ENCODE measurements at regions of chr1 and their contacts with region 1.

Region 1: DNA sequence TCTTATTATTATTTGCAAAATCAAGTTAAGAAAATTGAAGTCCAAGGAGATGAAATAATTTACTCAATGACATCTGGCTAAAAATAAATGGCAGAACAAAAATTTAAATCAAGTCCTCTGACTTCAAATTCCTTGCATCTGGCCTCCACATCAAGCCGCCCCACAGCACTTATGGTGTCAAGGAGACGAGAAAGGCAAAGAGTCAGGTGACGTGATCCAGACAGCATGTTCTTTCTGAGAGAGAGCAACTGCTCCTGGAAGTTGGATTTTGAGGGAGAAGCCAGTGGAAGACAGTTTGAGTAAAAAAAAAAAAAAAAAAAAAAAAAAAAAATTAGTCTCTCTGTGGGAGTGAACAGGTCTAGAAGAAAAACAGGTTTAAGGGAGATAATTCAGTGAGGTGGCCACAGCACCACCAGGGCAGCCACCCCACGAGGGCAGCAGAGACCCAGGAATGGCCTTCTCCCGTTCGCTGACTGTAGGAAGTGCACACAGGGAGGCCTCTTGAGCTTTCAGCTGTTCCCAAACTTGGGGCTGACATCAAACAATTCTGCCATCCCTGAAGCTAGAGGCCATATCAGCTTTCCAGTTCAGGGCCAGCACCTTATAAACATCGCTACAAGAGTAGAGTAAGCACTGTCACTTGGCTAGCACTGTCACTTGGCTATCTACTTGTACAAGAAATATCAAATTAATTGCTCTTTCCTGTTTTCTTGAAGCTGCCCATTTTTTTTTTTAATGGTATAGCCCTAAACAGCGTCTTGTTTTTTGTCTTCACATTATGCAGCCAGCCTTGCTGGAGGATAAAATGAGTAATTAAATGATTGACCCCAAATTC is 7.8 kb downstream of the C1orf162 start:
- DNase-seq: peak; percentile 76 to 86
- ATAC-seq: peak; percentile 95 to 99 (median 98)
- H3K4me3 ChIP-seq: no peak overlapping the region
- H3K27ac ChIP-seq: peak overlapping the region; percentile 13
- H3K4me1 ChIP-seq: peaks cover 8% of the 10 kb centered on the region
- H3K27me3 ChIP-seq: no peaks in the 10 kb centered on the region
- CTCF ChIP-seq: peak; percentile 71

Region 2: DNA sequence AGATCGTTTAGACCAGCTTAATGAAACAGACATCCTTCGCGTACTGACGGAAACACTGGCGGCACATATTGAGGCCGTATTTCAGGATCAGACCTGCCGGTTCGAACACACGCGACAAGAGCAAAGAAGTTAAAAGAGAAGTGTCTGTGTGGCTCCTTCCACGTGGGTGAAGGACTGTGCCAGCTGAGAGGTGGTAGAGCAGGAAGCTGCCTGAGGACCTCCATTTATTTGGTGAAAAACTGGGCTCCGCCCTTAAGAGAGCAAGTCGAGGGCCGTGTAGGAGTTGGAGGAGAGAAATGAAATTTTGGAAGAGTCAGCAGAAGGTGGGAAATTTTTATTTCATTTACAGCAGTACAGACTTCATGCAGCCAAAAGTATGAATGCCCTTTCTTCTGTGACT is 60.6 kb after region 1 on chr1:
- intact Hi-C with region 1: no loop called
- DNase-seq: no peak
- ATAC-seq: no peak
- H3K4me3 ChIP-seq: no peak overlapping the region
- H3K27ac ChIP-seq: no peak overlapping the region
- H3K4me1 ChIP-seq: no peaks in the 10 kb centered on the region
- H3K27me3 ChIP-seq: peaks cover 0 to 3% (median 3%) of the 10 kb centered on the region in 3 donors
- CTCF ChIP-seq: no peak

Region 3: DNA sequence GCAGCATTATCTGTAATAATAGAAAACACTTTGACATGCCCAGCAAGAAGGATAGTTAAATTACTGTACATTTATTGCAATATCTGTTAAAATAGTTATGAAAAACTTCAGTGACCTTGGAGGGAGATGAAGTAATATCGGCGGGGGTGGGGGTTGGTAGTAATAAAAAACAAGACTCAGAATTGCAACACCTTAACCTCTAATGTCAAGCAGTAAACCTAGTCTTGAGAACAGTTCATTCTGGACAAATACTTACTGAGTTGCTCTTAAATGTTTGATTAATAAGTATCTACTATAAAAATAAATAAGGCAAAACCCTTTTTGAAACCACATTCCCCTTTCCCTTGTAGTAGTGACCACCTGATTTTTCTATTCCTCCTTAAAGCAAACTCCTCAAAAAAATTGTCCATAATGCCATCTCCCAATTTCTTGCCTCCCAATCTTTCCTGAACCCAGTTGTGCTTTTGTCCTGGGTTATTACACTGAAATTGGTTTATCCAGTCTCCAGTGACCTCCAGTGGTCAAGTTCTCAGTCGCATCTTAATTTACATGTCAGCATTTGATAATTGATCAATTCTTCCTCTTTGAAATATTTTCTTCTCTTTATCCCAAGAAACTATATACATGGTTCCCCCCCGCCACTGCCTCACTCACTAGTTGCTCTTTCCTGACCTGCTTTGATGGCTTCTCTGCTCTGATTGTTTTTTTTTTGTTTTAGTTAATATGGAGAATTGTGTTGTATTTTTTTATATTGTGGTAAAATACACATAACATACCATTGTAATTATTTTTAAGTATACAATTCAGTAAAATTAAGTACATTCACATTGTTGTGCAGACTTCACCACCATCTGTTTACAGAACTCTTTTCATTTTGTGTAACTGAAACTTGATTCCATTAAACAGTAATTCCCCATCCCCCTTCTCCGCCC is 174.7 kb after region 1 on chr1:
- intact Hi-C with region 1: loop called in 1 of 2 experiments (anchors 5 kb)
- DNase-seq: no peak
- ATAC-seq: peak; percentile 52 to 90 (median 68)
- H3K4me3 ChIP-seq: no peak overlapping the region
- H3K27ac ChIP-seq: no peak overlapping the region
- H3K4me1 ChIP-seq: peaks cover 28% of the 10 kb centered on the region
- H3K27me3 ChIP-seq: no peaks in the 10 kb centered on the region
- CTCF ChIP-seq: peak; percentile 70

Region 4: DNA sequence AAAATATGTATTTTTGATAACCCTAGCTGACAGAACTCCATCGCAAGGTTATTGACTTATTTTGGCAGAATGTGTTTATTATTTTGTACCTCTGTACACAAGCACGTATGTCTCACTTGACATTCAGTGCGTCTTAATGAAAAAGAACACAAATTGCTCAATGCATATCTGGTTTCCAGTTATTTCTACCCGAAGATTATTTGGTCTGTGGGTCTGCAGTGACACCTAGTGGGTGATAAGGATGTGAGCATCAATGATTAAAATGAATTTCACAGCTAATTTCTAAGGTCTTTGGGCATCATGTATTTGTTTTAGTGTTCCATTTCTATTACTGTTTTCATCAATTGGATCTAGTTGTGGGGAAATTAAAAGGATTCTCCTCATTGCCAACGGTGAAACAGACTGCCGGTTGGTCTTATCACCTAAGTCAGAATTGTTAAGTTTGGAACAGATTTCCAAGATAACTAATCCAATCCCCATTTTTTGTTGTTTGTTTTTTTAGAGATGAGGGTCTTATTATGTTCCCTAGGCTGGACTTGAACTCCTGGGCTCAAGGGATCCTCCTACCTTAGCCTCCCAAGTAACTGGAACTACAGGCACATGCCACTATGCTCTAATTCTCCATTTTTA is 288.0 kb after region 1 on chr1:
- intact Hi-C with region 1: loop called (anchors 5 to 10 kb)
- DNase-seq: no peak
- ATAC-seq: peak; percentile 82 to 97 (median 93)
- H3K4me3 ChIP-seq: peak overlapping the region; percentile 35
- H3K27ac ChIP-seq: peak overlapping the region; percentile 50
- H3K4me1 ChIP-seq: peaks cover 10% of the 10 kb centered on the region
- H3K27me3 ChIP-seq: no peaks in the 10 kb centered on the region
- CTCF ChIP-seq: peak; percentile 90

Measured in psoas muscle (tissue), 8 donors.